Activated T-helper 2 cell treated with anti-CD3 and anti-CD28 coated beads, Interferon-gamma antibody, Interleukin-2, Interleukin-4, amounts not matched to agents 10 μg/mL and 5 μg/mL and 100 μg/mL, durations not matched to agents 14 hours and 24 hours and 36 hours (primary cell): ENCODE measurements at regions of chr18 and their contacts with region 1.

Region 1: GRCh38 chr18:79988451-79989194 is at the start of gene TXNL4A:
- DNase-seq: peak; percentile 80
- H3K4me3 Mint-ChIP-seq: peak within 1 kb of the TSS; percentile 96
- H3K27ac Mint-ChIP-seq: peak within 1 kb of the TSS; percentile 95
- H3K4me1 Mint-ChIP-seq: peaks cover 28% of the 10 kb centered on the region
- H3K27me3 Mint-ChIP-seq: no peaks in the 10 kb centered on the region
- total RNA-seq, gene TXNL4A: 181 and 194 TPM in 2 replicates

Region 2: DNA sequence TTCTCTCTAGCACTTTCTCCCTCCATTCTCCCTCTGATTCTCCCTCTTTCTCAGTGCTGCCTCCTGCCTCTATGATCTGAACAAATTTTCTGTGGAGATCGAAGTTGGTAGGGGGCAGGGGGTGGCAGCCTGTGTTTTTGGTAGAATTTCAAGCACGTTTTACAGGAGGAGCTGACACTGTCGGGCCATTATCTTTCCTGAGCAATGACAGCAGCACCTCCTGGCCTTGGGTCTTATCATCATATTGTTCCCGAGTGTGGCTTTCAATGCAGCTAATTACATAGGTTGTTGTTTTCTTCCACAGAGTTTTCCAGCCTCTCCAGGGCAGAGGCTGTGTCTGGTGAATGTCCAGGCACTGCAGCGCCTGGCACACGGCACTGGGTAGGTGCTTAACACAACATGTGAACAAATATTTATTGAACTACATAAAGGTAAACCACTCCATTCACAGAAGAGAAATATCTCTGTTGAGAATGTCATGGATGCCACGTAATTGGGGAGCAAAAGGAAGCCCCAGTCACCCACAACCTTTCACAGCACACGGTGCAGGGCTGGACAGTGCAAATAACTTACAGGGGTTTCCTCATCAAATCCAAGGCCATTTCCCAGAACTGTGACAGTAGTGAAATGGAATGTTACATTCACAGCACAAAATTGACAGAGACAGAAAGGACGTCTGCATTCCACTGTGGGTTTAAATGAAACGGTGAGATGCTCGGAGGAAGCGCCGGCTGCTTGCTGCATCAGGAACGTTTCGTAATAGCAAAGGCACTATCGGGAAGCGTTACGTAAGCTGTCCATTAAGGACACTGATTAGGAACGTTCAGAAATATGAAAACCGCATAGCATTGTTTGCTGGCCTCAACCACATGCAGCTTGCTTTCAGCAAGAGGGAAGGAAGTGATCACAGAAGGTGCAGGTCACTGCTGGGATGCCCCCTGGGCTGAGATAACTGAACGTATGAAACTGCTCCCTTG is 197.3 kb before region 1 on chr18:
- intact Hi-C with region 1: loop called (anchors 10 kb)
- DNase-seq: no peak
- H3K4me3 Mint-ChIP-seq: no peak overlapping the region
- H3K27ac Mint-ChIP-seq: no peak overlapping the region
- H3K4me1 Mint-ChIP-seq: peaks cover 9% of the 10 kb centered on the region
- H3K27me3 Mint-ChIP-seq: peaks cover 62% of the 10 kb centered on the region

Region 3: DNA sequence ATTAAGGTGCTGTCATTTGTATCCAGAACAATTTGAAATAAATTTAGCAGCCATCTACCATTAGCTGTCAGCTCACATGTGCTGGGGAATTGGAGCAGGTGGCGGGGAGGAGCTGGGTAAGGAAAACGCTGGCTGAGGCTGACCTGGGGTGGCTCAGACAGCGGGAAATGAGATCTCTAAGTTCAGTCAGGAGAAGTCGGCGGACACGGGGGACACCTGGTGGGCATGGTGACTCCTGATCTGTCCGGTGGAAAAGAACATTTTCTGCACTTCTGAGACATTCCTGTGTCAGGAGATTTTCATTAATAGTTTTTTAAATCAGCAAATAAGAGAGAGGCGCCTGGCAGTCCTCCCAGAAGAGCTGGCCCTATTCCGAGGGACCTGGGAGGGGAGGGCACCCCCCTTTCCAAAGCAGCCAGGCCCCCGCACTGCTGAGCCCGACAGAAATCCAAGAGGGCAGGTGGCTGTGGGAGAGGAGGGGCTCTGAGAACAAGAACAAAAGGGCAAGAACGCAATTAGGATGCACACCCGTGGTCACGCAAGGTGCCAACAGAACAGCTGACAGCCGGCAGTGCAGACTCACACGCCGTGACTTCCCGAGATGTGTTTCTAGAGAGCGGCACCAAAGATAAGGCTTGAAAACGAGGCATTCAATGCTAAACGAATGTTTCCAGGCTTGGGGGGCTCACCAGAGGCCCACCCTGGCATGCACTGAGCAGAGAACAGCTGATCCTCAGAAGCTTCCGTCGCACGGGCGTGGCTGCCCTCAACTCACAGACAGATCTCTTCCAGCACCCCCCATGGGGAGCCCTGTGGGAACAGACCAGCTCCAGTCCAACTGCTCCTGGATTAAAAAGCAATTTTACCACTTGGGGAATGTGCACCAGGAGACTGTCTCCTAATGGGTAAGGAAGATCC is 63.5 kb before region 1 on chr18:
- intact Hi-C with region 1: no loop called
- DNase-seq: no peak
- H3K4me3 Mint-ChIP-seq: no peak overlapping the region
- H3K27ac Mint-ChIP-seq: no peak overlapping the region
- H3K4me1 Mint-ChIP-seq: no peaks in the 10 kb centered on the region
- H3K27me3 Mint-ChIP-seq: no peaks in the 10 kb centered on the region

Region 4: GRCh38 chr18:80034068-80034851 is 45.6 kb after region 1 on chr18 and contains the start of gene RBFA:
- intact Hi-C with region 1: loop called (anchors 1 kb)
- DNase-seq: peak; percentile 98
- H3K4me3 Mint-ChIP-seq: peak within 1 kb of the TSS; percentile 78
- H3K27ac Mint-ChIP-seq: peak within 1 kb of the TSS; percentile 91
- H3K4me1 Mint-ChIP-seq: peaks cover 28% of the 10 kb centered on the region
- H3K27me3 Mint-ChIP-seq: no peaks in the 10 kb centered on the region
- total RNA-seq, gene RBFA: 48.4 and 49.4 TPM in 2 replicates